Activated CD4-positive, alpha-beta memory T cell treated with anti-CD3 and anti-CD28 coated beads, Interleukin-2, amount 10 ng/mL, durations not matched to agents 7 days and 5 days (primary cell): ENCODE measurements at regions of chr5 and their contacts with region 1.

Region 1: DNA sequence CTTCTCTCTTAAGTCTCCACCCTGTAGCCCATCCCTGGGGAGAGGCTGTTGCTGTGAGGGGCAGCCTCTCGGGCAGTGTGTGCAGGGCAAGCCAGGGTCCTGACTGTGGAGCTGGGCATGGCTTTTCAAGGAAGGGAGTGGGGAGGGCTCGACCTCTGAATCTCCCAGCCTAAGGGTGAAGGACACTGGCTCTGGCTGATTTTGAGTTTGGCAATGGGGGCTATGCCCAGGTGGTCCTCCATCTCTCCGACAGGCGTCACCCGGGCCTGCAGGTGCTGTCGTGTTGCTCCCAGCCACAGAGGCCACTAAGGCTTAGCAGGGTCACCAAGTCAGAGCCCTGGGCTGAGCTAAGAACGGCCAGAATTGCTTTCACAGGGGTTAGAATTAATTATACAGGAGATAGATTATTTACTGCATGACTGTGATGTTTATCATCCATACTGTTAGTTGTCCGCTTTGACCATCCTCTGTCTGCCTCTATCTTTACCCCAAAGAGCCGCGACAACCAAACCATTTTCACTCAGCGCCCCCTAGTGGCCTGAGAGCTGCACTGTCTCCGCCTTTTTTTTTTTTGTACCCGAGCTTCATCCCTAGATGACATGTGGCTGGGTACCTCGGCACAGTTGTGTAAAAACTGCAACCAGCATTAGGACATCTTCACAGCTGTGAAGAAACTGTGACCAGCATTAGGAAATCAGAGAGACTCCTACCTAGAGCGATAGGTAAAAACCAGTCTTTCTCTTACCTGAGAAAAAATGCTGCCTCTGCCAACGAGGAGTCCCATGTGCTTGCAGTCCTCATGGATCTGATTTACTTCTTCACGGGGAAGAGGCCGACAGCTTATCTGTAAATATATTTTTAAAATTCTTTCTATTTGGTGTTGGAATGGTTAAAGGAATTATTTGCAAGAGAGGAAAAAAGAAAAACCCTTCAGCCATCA is 44.5 kb downstream of the AGXT2 start:
- DNase-seq: peak; percentile 61
- H3K4me3 Mint-ChIP-seq: no peak overlapping the region
- H3K27ac Mint-ChIP-seq: no peak overlapping the region
- H3K4me1 Mint-ChIP-seq: no peaks in the 10 kb centered on the region
- H3K27me3 Mint-ChIP-seq: peaks cover 19% of the 10 kb centered on the region

Region 2: GRCh38 chr5:34522599-34523386 is 480.5 kb before region 1 on chr5:
- CTCF ChIA-PET with region 1: interaction called, 19 read pairs
- POLR2A ChIA-PET with region 1: no interaction called
- DNase-seq: peak; percentile 54
- H3K4me3 Mint-ChIP-seq: no peak overlapping the region
- H3K27ac Mint-ChIP-seq: no peak overlapping the region
- H3K4me1 Mint-ChIP-seq: no peaks in the 10 kb centered on the region
- H3K27me3 Mint-ChIP-seq: peaks cover 11% of the 10 kb centered on the region

Region 3: GRCh38 chr5:34957857-34958690 is 45.2 kb before region 1 on chr5:
- CTCF ChIA-PET with region 1: interaction called, 24 read pairs
- POLR2A ChIA-PET with region 1: interaction called, 3 read pairs
- DNase-seq: no peak
- H3K4me3 Mint-ChIP-seq: no peak overlapping the region
- H3K27ac Mint-ChIP-seq: no peak overlapping the region
- H3K4me1 Mint-ChIP-seq: peaks cover 23% of the 10 kb centered on the region
- H3K27me3 Mint-ChIP-seq: no peaks in the 10 kb centered on the region

Region 4: GRCh38 chr5:34991486-34992238 is 11.6 kb before region 1 on chr5:
- CTCF ChIA-PET with region 1: interaction called, 13 read pairs
- POLR2A ChIA-PET with region 1: no interaction called
- DNase-seq: no peak
- H3K4me3 Mint-ChIP-seq: no peak overlapping the region
- H3K27ac Mint-ChIP-seq: no peak overlapping the region
- H3K4me1 Mint-ChIP-seq: no peaks in the 10 kb centered on the region
- H3K27me3 Mint-ChIP-seq: peaks cover 35% of the 10 kb centered on the region

Region 5: DNA sequence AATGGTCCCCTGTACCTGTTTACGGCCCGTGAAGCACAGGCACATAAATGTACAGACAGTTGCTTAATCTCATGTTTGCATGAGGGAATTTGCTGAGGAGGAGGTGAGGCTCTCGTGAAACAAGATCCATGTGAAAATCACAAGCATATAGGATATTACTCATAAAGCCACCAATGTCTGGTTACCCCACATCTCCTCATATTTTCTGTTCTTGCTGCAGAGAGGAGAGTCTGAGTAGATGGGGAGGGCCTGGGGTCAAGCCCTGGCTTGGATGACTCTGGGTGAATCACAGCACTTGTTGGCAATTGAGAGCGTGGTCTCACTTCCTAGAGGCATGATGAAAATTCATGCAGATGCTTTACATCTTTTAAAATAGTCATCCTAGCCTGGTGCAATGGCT is 43.5 kb after region 1 on chr5:
- CTCF ChIA-PET with region 1: no interaction called
- POLR2A ChIA-PET with region 1: no interaction called
- DNase-seq: no peak
- H3K4me3 Mint-ChIP-seq: no peak overlapping the region
- H3K27ac Mint-ChIP-seq: no peak overlapping the region
- H3K4me1 Mint-ChIP-seq: no peaks in the 10 kb centered on the region
- H3K27me3 Mint-ChIP-seq: peaks cover 6% of the 10 kb centered on the region